PC-9 (cell line): ENCODE measurements at regions of chr1 and their contacts with region 1.

Region 1: GRCh38 chr1:15424146-15424667 is 14.0 kb upstream of the CTRC start:
- DNase-seq: peak; percentile 77 to 79
- H3K4me3 ChIP-seq: no peak overlapping the region
- H3K27ac ChIP-seq: peak overlapping the region; percentile 44; the same call in 1 of the 2 replicates
- H3K4me1 ChIP-seq: peaks cover 27% of the 10 kb centered on the region
- H3K27me3 ChIP-seq: no peaks in the 10 kb centered on the region
- CTCF ChIP-seq: no peak

Region 2: DNA sequence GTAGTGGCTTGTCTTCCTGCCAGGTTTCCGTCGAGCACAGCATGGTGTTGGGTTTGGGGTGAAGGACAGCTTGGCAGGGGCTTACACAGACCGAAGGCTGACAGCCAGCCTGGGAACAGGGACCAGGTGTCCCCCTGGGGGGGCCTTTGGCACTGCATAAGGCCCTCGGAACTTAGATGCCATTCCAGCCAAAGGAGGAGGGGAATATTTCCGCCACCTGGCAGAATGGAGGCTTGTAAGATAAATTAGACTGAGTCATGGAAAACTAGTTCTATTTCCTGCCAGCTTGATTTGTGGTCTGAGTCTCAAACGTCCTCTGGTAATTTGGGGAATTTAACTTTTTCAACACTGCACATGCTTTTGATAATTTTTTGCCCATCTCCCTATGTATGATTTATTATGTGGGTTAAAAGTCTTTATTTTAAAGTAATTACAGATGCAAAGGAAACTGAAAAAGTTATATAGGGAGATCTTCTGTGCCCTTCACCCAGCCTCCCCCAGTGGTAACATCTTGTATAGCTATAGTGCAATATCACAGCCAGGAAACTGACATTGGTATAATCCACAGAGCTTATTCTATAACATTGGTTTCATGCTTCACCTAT is 282.2 kb before region 1 on chr1:
- CTCF ChIA-PET with region 1: no interaction called
- POLR2A ChIA-PET with region 1: no interaction called
- intact Hi-C with region 1: loop called (anchors 5 kb)
- DNase-seq: peak; percentile 29 to 55
- H3K4me3 ChIP-seq: no peak overlapping the region
- H3K27ac ChIP-seq: no peak overlapping the region
- H3K4me1 ChIP-seq: peaks cover 28% of the 10 kb centered on the region
- H3K27me3 ChIP-seq: no peaks in the 10 kb centered on the region
- CTCF ChIP-seq: no peak; the same call in 1 of the 2 replicates

Region 3: GRCh38 chr1:15436881-15437442 is 12.8 kb after region 1 on chr1:
- CTCF ChIA-PET with region 1: no interaction called
- POLR2A ChIA-PET with region 1: no interaction called
- intact Hi-C with region 1: no loop called
- DNase-seq: no peak
- H3K4me3 ChIP-seq: no peak overlapping the region
- H3K27ac ChIP-seq: no peak overlapping the region
- H3K4me1 ChIP-seq: no peaks in the 10 kb centered on the region
- H3K27me3 ChIP-seq: no peaks in the 10 kb centered on the region
- CTCF ChIP-seq: no peak

Region 4: GRCh38 chr1:16048573-16049189 is 624.5 kb after region 1 on chr1:
- CTCF ChIA-PET with region 1: no interaction called
- POLR2A ChIA-PET with region 1: interaction called, 18 read pairs
- intact Hi-C with region 1: no loop called
- DNase-seq: peak in 1 of 2 experiments; percentile 68
- H3K4me3 ChIP-seq: peak overlapping the region; percentile 42
- H3K27ac ChIP-seq: no peak overlapping the region
- H3K4me1 ChIP-seq: 0 out of 2 replicates have a peak, but pooled peaks cover 6% of the 10 kb centered on the region
- H3K27me3 ChIP-seq: no peaks in the 10 kb centered on the region
- CTCF ChIP-seq: no peak